ENCODE measurements at regions of chr1 and their contacts with region 1.

Region 1: DNA sequence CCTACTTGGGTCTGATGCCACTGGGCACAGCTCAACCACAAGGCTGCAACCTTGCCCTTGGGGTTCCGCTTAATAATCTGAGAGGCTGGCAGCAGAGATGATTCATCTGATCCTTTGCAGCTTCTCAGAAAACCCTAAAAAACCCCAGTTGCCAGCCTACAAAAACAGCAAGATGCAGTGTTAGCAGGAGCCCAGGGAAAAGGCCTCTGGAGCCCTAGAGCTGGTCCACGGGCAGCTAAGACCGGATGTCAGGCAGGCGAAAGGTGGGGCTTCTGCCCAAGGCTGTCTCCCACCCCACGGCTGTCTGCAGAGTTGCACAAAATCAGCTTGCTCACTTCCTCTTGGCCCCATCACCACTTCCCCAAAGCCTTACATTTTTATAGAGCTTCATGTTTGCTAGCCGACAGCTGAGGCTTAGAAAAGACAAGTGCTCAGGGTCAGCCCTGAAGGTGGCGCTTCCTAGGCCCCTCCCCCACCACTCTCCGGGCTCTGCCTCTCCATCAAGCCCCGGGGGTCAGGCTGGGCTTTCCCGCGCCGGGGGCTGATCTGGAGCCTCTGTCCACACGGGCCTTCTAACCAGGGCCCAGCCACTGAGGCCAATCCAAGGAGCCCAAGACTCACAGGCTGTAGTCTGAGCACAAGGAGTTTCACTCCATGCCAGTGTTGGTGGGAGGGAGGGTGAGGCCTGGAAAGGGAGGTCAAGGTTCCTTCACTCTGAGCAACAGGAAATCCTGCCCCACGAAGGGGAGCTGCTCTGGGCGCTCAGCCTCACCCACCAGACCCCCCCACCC is 4.2 kb upstream of the ADORA3 start:
- DNase-seq: peak; percentile 83
- H3K4me3 Mint-ChIP-seq: peak overlapping the region; percentile 62
- H3K27ac Mint-ChIP-seq: peak overlapping the region; percentile 94
- H3K4me1 Mint-ChIP-seq: peaks cover 62% of the 10 kb centered on the region
- H3K27me3 Mint-ChIP-seq: no peaks in the 10 kb centered on the region

Region 2: GRCh38 chr1:110857964-110858948 is 649.4 kb before region 1 on chr1:
- CTCF ChIA-PET with region 1: no interaction called
- POLR2A ChIA-PET with region 1: no interaction called
- intact Hi-C with region 1: no loop called
- DNase-seq: no peak
- H3K4me3 Mint-ChIP-seq: peak overlapping the region; percentile 12
- H3K27ac Mint-ChIP-seq: no peak overlapping the region
- H3K4me1 Mint-ChIP-seq: peaks cover 22% of the 10 kb centered on the region
- H3K27me3 Mint-ChIP-seq: peaks cover 7% of the 10 kb centered on the region

Region 3: GRCh38 chr1:111471012-111471411 is 36.6 kb before region 1 on chr1:
- CTCF ChIA-PET with region 1: interaction called, 29 read pairs
- POLR2A ChIA-PET with region 1: interaction called, 18 read pairs
- intact Hi-C with region 1: loop called (anchors 1 kb)
- DNase-seq: peak; percentile 85
- H3K4me3 Mint-ChIP-seq: no peak overlapping the region
- H3K27ac Mint-ChIP-seq: no peak overlapping the region
- H3K4me1 Mint-ChIP-seq: peaks cover 31% of the 10 kb centered on the region
- H3K27me3 Mint-ChIP-seq: no peaks in the 10 kb centered on the region

Region 4: GRCh38 chr1:111592389-111593361 is 85.1 kb after region 1 on chr1:
- CTCF ChIA-PET with region 1: interaction called, 29 read pairs
- POLR2A ChIA-PET with region 1: interaction called, 25 read pairs
- intact Hi-C with region 1: loop called (anchors 1 kb)
- DNase-seq: peak; percentile 99
- H3K4me3 Mint-ChIP-seq: peak overlapping the region; percentile 61
- H3K27ac Mint-ChIP-seq: peak overlapping the region; percentile 93
- H3K4me1 Mint-ChIP-seq: peaks cover 74% of the 10 kb centered on the region
- H3K27me3 Mint-ChIP-seq: no peaks in the 10 kb centered on the region

Region 5: GRCh38 chr1:111648806-111649205 is 141.2 kb after region 1 on chr1:
- CTCF ChIA-PET with region 1: interaction called, 13 read pairs
- POLR2A ChIA-PET with region 1: interaction called, 4 read pairs
- intact Hi-C with region 1: no loop called
- DNase-seq: no peak
- H3K4me3 Mint-ChIP-seq: no peak overlapping the region
- H3K27ac Mint-ChIP-seq: peak overlapping the region; percentile 64
- H3K4me1 Mint-ChIP-seq: peaks cover 74% of the 10 kb centered on the region
- H3K27me3 Mint-ChIP-seq: no peaks in the 10 kb centered on the region

Region 6: DNA sequence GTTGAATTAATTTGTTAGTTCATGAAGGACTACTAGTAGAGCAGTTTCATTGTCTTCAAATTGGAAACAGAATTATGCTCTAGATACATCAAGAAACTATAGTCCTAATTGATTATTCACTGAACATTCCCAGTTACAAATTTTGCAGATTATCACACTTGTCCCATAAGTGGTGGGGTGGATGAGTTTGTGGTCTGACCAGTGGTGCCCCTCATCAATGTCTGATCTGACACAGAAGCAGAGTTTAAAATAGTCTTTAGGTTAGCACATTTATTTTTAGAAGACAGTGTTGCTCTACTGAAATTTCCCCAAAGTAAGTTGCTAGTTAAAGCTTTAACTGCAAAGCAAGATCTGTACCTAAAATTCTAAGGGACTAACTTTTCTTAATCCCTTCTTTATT is 188.7 kb after region 1 on chr1:
- CTCF ChIA-PET with region 1: interaction called, 30 read pairs
- POLR2A ChIA-PET with region 1: interaction called, 5 read pairs
- intact Hi-C with region 1: no loop called
- DNase-seq: no peak
- H3K4me3 Mint-ChIP-seq: no peak overlapping the region
- H3K27ac Mint-ChIP-seq: peak overlapping the region; percentile 49
- H3K4me1 Mint-ChIP-seq: peaks cover 58% of the 10 kb centered on the region
- H3K27me3 Mint-ChIP-seq: no peaks in the 10 kb centered on the region

Region 7: DNA sequence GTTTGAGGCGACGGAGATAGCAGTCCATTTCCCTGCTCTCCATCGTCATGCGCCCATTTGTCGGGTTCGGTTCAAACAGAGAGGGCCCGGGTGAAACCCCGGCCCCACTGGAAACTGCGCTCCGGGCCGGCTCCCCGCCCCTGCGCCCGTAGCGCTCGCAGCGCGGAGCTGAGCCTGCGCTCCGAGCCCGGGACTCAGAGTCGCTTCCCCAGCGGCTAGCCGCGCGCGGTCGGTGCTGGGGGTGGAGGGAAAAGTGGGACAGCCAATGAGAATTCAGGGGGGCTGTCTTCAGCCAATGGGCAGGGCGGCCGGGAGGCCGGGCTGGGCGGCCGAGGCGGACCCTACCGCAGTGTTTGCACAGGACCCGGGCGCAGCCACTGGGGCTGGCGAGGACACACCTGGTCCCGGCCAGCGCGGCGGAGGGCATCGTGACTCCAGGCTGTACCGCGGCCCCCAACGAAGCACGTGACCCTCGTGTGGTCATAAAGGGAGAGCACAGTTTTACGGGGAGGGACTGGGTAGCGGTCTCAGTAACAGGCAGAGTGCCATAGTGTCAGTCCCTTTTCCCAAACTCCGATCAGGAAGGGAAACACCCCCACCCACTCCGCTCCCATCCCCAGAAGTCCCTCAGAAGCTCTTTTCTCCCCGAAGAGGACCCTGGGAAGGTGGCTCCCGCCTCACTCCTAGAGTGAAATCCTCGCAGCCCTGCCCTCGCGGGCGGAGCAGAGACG is 231.8 kb after region 1 on chr1 and contains the start of gene INKA2:
- CTCF ChIA-PET with region 1: interaction called, 17 read pairs
- POLR2A ChIA-PET with region 1: interaction called, 9 read pairs
- intact Hi-C with region 1: no loop called
- DNase-seq: peak; percentile 88
- H3K4me3 Mint-ChIP-seq: peak within 1 kb of the TSS; percentile 84
- H3K27ac Mint-ChIP-seq: no peak within 1 kb of the TSS
- H3K4me1 Mint-ChIP-seq: peaks cover 11% of the 10 kb centered on the region
- H3K27me3 Mint-ChIP-seq: peaks cover 28% of the 10 kb centered on the region
- total RNA-seq, gene INKA2: 1.4 to 2.3 TPM

Region 8: DNA sequence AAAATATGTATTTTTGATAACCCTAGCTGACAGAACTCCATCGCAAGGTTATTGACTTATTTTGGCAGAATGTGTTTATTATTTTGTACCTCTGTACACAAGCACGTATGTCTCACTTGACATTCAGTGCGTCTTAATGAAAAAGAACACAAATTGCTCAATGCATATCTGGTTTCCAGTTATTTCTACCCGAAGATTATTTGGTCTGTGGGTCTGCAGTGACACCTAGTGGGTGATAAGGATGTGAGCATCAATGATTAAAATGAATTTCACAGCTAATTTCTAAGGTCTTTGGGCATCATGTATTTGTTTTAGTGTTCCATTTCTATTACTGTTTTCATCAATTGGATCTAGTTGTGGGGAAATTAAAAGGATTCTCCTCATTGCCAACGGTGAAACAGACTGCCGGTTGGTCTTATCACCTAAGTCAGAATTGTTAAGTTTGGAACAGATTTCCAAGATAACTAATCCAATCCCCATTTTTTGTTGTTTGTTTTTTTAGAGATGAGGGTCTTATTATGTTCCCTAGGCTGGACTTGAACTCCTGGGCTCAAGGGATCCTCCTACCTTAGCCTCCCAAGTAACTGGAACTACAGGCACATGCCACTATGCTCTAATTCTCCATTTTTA is 262.0 kb after region 1 on chr1:
- CTCF ChIA-PET with region 1: interaction called, 34 read pairs
- POLR2A ChIA-PET with region 1: no interaction called
- intact Hi-C with region 1: no loop called
- DNase-seq: peak; percentile 44
- H3K4me3 Mint-ChIP-seq: no peak overlapping the region
- H3K27ac Mint-ChIP-seq: no peak overlapping the region
- H3K4me1 Mint-ChIP-seq: peaks cover 3% of the 10 kb centered on the region
- H3K27me3 Mint-ChIP-seq: no peaks in the 10 kb centered on the region

Region 9: DNA sequence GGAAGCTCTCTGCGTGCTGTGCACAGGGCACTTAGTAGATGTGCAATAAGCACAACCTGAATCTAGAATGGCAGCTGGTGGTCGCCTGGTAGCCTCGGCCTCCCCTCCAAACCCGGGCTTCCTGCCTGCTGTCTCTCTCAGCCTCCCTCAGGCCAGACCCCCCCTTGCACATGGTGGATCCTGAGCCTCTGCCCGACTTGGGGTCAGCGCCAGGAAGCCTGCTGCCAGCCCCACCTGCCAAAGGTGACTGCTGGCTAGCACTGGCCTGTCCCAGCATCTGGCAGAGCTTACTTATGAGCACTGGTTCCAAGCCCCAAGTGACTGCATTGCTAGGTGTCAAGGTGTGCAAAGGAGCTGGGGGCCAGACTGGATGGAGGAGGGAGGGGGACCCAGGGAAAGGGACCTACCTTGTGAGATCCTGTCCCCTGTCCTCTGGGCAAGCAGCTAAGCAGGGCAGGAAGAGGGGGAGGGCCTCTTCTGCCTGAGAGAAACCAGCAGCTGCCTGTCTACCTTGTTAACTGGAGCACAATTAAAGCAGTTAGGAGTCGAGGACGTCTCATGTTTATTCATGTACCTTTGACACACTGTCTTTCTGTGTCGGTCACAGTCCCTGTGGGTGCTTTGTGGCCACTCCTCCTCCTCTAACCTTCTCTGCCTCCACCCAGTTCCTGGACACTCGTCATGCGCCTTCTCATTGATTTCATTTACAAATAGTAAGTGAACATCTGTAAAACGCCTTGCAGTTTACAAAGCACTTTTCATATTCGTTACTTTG is 349.0 kb after region 1 on chr1:
- CTCF ChIA-PET with region 1: no interaction called
- POLR2A ChIA-PET with region 1: no interaction called
- intact Hi-C with region 1: no loop called
- DNase-seq: no peak
- H3K4me3 Mint-ChIP-seq: no peak overlapping the region
- H3K27ac Mint-ChIP-seq: no peak overlapping the region
- H3K4me1 Mint-ChIP-seq: no peaks in the 10 kb centered on the region
- H3K27me3 Mint-ChIP-seq: peaks cover 20% of the 10 kb centered on the region